Dorsolateral prefrontal cortex (tissue), 120 donors: ENCODE measurements at regions of chr2 and their contacts with region 1.

Region 1: GRCh38 chr2:113248997-113249770 is 29.5 kb downstream of the PAX8 start:
- DNase-seq: peak; percentile 16 to 82 (median 69)
- H3K4me3 ChIP-seq: no peak overlapping the region
- H3K27ac ChIP-seq: no peak overlapping the region
- H3K27me3 ChIP-seq: peaks cover 0 to 17% (median 0%) of the 10 kb centered on the region in 45 donors
- CTCF ChIP-seq: peak; percentile 58 to 94 (median 86)

Region 2: GRCh38 chr2:113291191-113291590 is 42.0 kb after region 1 on chr2:
- intact Hi-C with region 1: no loop called
- DNase-seq: no peak
- H3K4me3 ChIP-seq: no peak overlapping the region
- H3K27ac ChIP-seq: no peak overlapping the region
- H3K27me3 ChIP-seq: peaks cover 0 to 7% (median 0%) of the 10 kb centered on the region in 45 donors
- CTCF ChIP-seq: no peak

Region 3: DNA sequence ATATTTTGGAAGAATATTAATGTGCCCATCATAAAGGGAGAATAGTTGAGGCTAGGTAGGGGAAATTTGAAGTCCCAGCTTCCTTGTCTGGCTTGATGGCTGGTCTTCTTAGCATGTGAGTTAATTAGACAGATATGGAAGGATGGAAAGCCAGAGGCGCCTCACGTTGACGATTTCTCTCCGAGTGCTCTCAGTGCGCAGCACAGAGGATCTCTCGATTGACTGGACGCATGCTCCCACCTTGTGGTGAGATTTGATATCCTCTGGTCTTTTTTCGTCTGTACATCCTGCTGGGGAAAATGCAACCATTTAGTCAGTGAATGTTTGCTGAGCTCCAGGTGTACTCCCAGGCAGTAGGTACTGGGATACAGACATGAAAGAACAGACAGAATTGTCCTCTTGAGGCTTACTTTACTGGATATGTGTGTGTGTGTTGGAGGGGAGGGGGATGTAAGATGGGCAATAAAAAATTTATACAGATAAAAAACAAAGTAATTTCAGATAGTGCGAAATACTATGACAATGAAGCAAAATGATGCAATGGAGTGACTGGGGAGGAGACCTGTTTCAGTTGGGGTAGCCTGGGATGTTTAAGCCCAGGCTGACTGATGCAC is 121.4 kb after region 1 on chr2:
- intact Hi-C with region 1: loop called (anchors 2 to 5 kb)
- DNase-seq: peak; percentile 24 to 76 (median 66)
- H3K4me3 ChIP-seq: no peak overlapping the region
- H3K27ac ChIP-seq: no peak overlapping the region
- H3K27me3 ChIP-seq: no peaks in the 10 kb centered on the region
- CTCF ChIP-seq: peak; percentile 47 to 91 (median 82)